ENCODE measurements at regions of chr7 and their contacts with region 1.

Region 1: GRCh38 chr7:142516038-142516501 is 233.2 kb upstream of the PRSS1 start:
- DNase-seq: peak; percentile 73 to 87 (median 83)
- H3K4me3 ChIP-seq: peak overlapping the region in 1 of 7 experiments; percentile 6
- H3K27ac ChIP-seq: no peak overlapping the region
- H3K4me1 ChIP-seq: peaks cover 2 to 35% (median 23%) of the 10 kb centered on the region in 4 experiments
- H3K27me3 ChIP-seq: no peaks in the 10 kb centered on the region

Region 2: DNA sequence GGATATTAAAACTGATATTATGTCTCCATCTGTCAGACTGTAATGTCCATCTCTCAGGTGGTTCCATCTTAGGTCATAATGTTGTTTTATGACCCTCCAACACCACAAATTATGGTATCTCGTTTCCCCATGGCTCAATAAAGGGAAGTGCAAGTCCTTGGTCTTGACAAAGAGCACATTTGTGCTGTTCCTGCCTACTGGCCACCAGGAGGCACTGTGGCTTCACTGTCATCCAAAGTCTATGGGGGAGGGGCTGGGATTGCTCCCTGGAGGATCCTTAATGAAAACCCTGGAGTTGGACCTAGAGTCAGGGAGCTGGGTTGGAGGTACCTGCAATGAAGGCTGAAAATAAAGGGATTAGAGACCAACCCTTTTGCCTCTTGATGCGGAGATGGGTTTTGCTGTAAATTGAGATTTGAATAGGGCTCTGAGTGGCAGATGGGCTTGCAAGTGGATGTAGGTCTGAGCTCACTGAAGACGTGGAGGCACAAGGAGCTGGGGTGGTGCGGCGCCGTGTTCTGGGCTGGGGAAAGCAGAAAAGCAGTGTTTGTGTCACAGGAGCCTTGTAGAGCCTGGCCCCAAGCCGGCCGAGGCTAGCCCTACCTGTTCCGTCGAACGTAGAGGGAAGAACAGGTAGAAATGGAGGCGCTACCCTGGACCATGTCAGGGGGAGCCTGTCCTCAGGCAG is 77.7 kb before region 1 on chr7:
- CTCF ChIA-PET with region 1: interaction called, 2,564 read pairs
- POLR2A ChIA-PET with region 1: no interaction called
- DNase-seq: peak; percentile 69 to 80 (median 77)
- H3K4me3 ChIP-seq: no peak overlapping the region
- H3K27ac ChIP-seq: no peak overlapping the region
- H3K4me1 ChIP-seq: peaks cover 32 to 91% (median 66%) of the 10 kb centered on the region in 4 experiments
- H3K27me3 ChIP-seq: no peaks in the 10 kb centered on the region

Region 3: GRCh38 chr7:142459551-142459963 is 56.5 kb before region 1 on chr7:
- CTCF ChIA-PET with region 1: interaction called, 2,564 read pairs
- POLR2A ChIA-PET with region 1: no interaction called
- DNase-seq: peak; percentile 83 to 89 (median 83)
- H3K4me3 ChIP-seq: peak overlapping the region in 1 of 7 experiments; percentile 36
- H3K27ac ChIP-seq: peak overlapping the region; percentile 27 to 31
- H3K4me1 ChIP-seq: peaks cover 9 to 80% (median 67%) of the 10 kb centered on the region in 4 experiments
- H3K27me3 ChIP-seq: no peaks in the 10 kb centered on the region

Region 4: DNA sequence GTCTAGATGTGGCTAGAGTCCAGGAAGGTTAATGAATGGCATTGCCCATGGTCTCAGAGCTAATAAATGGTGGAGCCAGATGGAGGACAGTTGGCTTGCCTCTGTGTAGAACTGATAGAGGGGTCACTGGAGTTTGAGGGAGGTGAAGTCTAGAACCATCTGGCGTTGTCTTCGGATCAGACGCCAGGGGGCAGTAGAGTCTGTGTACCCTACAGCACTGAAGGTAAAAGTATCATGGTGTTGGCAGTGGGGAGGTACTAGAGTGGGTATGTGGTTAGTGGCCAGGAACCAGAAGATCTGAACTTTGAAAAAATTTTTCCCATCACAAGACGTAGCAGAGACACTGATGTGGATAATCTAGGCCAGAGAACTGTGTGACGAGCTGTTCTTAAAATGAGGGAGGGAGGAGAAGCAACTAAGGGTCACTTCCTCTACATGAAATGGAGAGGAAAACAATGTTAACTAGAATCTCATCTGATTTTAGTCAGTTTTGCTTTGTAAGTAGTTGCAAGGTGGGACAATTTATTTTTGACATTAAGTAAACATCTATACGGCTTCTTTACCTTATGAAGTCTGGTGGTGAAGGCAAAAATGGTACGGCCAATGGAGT is 30.3 kb before region 1 on chr7:
- CTCF ChIA-PET with region 1: interaction called, 2,564 read pairs
- POLR2A ChIA-PET with region 1: no interaction called
- DNase-seq: peak in 2 of 3 donors; percentile 52 to 55
- H3K4me3 ChIP-seq: no peak overlapping the region
- H3K27ac ChIP-seq: no peak overlapping the region
- H3K4me1 ChIP-seq: peaks cover 10 to 79% (median 77%) of the 10 kb centered on the region in 4 experiments
- H3K27me3 ChIP-seq: no peaks in the 10 kb centered on the region

Region 5: GRCh38 chr7:142587578-142588191 is 71.6 kb after region 1 on chr7:
- CTCF ChIA-PET with region 1: interaction called, 35 read pairs
- POLR2A ChIA-PET with region 1: no interaction called
- DNase-seq: peak; percentile 87 to 88 (median 88)
- H3K4me3 ChIP-seq: no peak overlapping the region
- H3K27ac ChIP-seq: no peak overlapping the region
- H3K4me1 ChIP-seq: peaks cover 2 to 27% (median 22%) of the 10 kb centered on the region in 4 experiments
- H3K27me3 ChIP-seq: no peaks in the 10 kb centered on the region

Region 6: GRCh38 chr7:142822714-142823113 is 306.6 kb after region 1 on chr7:
- CTCF ChIA-PET with region 1: no interaction called
- POLR2A ChIA-PET with region 1: no interaction called
- DNase-seq: no peak
- H3K4me3 ChIP-seq: no peak overlapping the region
- H3K27ac ChIP-seq: no peak overlapping the region
- H3K4me1 ChIP-seq: no peaks in the 10 kb centered on the region
- H3K27me3 ChIP-seq: no peaks in the 10 kb centered on the region

Measured in common myeloid progenitor, CD34-positive (primary cell).